ENCODE measurements at regions of chr6 and their contacts with region 1.

Region 1: GRCh38 chr6:75748743-75749501 is at the start of gene MYO6:
- DNase-seq: peak; percentile 79 to 91
- ATAC-seq: peak; percentile 95
- H3K4me3 ChIP-seq: peak within 1 kb of the TSS; percentile 71 to 99
- H3K27ac ChIP-seq: peak within 1 kb of the TSS; percentile 6 to 71
- H3K4me1 ChIP-seq: no peaks in the 10 kb centered on the region
- H3K27me3 ChIP-seq: no peaks in the 10 kb centered on the region
- total RNA-seq, gene MYO6: 24.4 to 24.8 TPM

Region 2: GRCh38 chr6:75601304-75602245 is 147.3 kb before region 1 on chr6 and contains the start of gene SENP6:
- intact Hi-C with region 1: loop called in 1 of 2 experiments (anchors 10 kb)
- DNase-seq: peak; percentile 88 to 92
- ATAC-seq: peak; percentile 94
- H3K4me3 ChIP-seq: peak within 1 kb of the TSS; percentile 70 to 96
- H3K27ac ChIP-seq: peak within 1 kb of the TSS; percentile 81 to 96
- H3K4me1 ChIP-seq: peaks cover 0 to 3% of the 10 kb centered on the region in 2 donors
- H3K27me3 ChIP-seq: no peaks in the 10 kb centered on the region
- total RNA-seq, gene SENP6: 141 to 147 TPM

Region 3: GRCh38 chr6:75997487-75998095 is 248.7 kb after region 1 on chr6:
- intact Hi-C with region 1: no loop called
- DNase-seq: no peak
- ATAC-seq: no peak
- H3K4me3 ChIP-seq: no peak overlapping the region
- H3K27ac ChIP-seq: no peak overlapping the region
- H3K4me1 ChIP-seq: no peaks in the 10 kb centered on the region
- H3K27me3 ChIP-seq: no peaks in the 10 kb centered on the region